RWPE1 (cell line): ENCODE measurements at regions of chr11 and their contacts with region 1.

Region 1: GRCh38 chr11:92424281-92424680 is 199.7 kb downstream of the FAT3 start:
- DNase-seq: no peak
- H3K27ac ChIP-seq: no peak overlapping the region
- CTCF ChIP-seq: no peak

Region 2: DNA sequence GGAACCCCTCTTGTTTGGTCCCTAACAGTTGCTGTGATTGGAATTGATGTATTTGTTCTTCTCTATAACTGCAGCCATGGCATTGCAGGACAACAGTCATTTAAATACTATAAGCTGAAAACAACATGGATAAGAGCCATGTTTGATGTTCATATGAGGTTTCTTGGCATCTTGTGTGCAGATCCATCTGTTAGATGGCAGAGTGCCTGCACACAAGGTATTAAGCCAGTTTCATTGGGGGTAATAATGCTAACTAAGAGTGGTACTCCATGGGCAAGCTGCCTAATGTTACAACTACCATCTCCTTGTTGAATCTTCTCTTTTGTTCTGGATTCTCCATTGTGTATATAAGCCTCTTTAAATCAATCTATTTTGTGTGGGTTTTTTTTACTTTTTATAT is 1995.4 kb before region 1 on chr11:
- CTCF ChIA-PET with region 1: interaction called, 11 read pairs
- POLR2A ChIA-PET with region 1: no interaction called
- DNase-seq: no peak
- H3K27ac ChIP-seq: no peak overlapping the region
- CTCF ChIP-seq: no peak

Region 3: GRCh38 chr11:92225568-92226330 is 198.5 kb before region 1 on chr11:
- CTCF ChIA-PET with region 1: no interaction called
- POLR2A ChIA-PET with region 1: no interaction called
- DNase-seq: no peak
- H3K27ac ChIP-seq: no peak overlapping the region
- CTCF ChIP-seq: no peak